ENCODE measurements at regions of chr6 and their contacts with region 1.

Region 1: DNA sequence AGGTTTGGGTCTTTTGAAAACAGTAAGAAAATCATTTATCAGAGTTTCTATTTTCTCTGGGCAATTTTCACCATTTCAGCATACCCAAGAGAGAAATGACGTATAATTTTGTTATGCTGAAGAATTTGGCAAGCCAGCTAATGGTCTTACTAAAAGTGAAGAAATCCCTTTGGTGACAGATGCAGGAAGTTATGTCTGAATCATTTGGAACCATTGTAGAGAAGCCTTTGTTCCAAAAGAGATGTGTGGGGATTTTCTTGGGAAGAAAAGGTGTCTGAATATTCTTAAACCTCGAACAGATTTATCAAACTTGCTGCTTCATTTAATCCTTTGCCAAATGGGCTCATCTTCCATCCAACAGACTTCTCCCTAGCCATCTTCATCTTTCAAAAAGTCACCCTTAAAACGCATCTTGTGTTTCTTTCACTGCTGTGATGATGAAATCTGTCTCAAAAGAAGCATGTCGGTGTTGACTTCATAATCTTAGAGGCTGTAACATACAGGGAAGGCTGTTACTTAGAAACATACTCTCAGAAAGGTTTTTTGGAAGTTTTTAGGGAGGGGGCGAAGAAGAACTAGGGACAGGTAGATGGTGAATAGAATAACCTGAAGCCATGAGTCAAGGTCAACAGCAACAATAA is 39.5 kb downstream of the CITED2 start:
- DNase-seq: no peak
- H3K4me3 ChIP-seq: no peak overlapping the region
- H3K27ac ChIP-seq: peak overlapping the region; percentile 69 to 71
- H3K4me1 ChIP-seq: peaks cover 4 to 15% of the 10 kb centered on the region in 2 donors
- H3K27me3 ChIP-seq: no peaks in the 10 kb centered on the region
- CTCF ChIP-seq: no peak

Region 2: GRCh38 chr6:139291813-139292619 is 42.9 kb before region 1 on chr6 and contains the start of gene TXLNB:
- intact Hi-C with region 1: loop called (anchors 5 kb)
- DNase-seq: peak; percentile 58 to 84
- H3K4me3 ChIP-seq: peak within 1 kb of the TSS; percentile 23 to 31
- H3K27ac ChIP-seq: peak within 1 kb of the TSS; percentile 55 to 69
- H3K4me1 ChIP-seq: peaks cover 0 to 24% of the 10 kb centered on the region in 2 donors
- H3K27me3 ChIP-seq: no peaks in the 10 kb centered on the region
- CTCF ChIP-seq: peak in 1 of 3 experiments; percentile 9
- total RNA-seq, gene TXLNB: not detected

Measured in ascending aorta (tissue), 2 donors.